ENCODE measurements at regions of chr10 and their contacts with region 1.

Region 1: DNA sequence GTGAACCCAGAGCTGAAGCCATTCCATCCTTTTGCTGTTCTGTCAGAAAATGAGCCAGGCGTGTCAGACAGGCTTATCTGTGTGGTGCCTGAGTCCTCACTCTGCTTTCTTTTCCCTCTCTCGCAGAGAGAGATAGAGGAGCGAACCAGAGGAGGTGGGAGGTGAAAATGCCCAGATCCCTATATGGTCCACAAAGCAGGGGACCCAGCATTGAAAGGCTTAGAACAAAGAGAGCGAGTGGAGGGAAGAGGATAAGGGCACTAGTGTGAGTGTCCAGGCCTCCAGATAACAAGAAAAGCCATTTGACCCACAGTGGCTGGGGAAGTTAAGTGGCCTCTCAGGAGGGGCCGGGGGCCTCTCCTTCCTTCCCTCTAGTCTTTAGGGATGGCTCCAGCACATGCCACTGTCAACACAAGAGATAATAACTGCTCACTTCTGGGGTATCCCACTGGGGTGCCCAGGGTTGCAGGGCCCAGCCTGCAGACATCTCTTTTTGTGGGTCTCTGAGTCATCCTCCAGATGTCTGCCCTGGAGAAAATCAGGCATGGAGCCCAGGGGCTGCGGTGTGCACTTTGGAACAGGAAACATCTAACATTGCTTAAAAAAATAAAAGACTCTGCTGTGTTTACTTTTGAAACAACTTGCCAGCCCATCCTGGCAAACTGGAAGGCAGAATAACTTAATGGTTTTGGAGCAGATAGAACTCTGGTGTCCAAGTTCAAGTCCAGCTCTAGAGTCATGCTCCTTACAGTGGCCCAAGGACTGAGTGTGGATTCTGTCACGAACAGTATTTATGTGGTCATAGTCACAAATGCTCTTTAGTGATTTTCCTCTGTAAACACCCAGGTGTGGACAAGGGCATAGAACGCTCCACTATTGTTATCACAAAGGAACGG is 189.5 kb downstream of the CXCL12 start:
- DNase-seq: peak; percentile 59
- H3K4me3 ChIP-seq: no peak overlapping the region
- H3K27ac ChIP-seq: no peak overlapping the region
- H3K4me1 ChIP-seq: no peaks in the 10 kb centered on the region
- H3K27me3 ChIP-seq: no peaks in the 10 kb centered on the region
- CTCF ChIP-seq: no peak

Region 2: GRCh38 chr10:44125879-44126278 is 69.5 kb before region 1 on chr10:
- CTCF ChIA-PET with region 1: no interaction called
- dilution Hi-C with region 1: loop called (anchors 5 kb)
- in situ Hi-C with region 1: no loop called
- intact Hi-C with region 1: no loop called
- DNase-seq: no peak
- H3K4me3 ChIP-seq: no peak overlapping the region
- H3K27ac ChIP-seq: no peak overlapping the region
- H3K4me1 ChIP-seq: no peaks in the 10 kb centered on the region
- H3K27me3 ChIP-seq: no peaks in the 10 kb centered on the region
- CTCF ChIP-seq: no peak

Region 3: GRCh38 chr10:44209806-44210205 is 14.4 kb after region 1 on chr10:
- CTCF ChIA-PET with region 1: no interaction called
- dilution Hi-C with region 1: no loop called
- in situ Hi-C with region 1: no loop called
- intact Hi-C with region 1: no loop called
- DNase-seq: no peak
- H3K4me3 ChIP-seq: no peak overlapping the region
- H3K27ac ChIP-seq: no peak overlapping the region
- H3K4me1 ChIP-seq: no peaks in the 10 kb centered on the region
- H3K27me3 ChIP-seq: no peaks in the 10 kb centered on the region
- CTCF ChIP-seq: no peak

Measured in mammary epithelial cell (primary cell).